Activated CD8-positive, alpha-beta T cell treated with anti-CD3 and anti-CD28 coated beads for 36 hours (primary cell): ENCODE measurements at regions of chr5 and their contacts with region 1.

Region 1: GRCh38 chr5:131382407-131383395 is 118.8 kb downstream of the CDC42SE2 start:
- DNase-seq: peak; percentile 56
- ATAC-seq: peak; percentile 68
- H3K4me3 Mint-ChIP-seq: peak overlapping the region; percentile 47
- H3K27ac Mint-ChIP-seq: peak overlapping the region; percentile 99
- H3K4me1 Mint-ChIP-seq: peaks cover 81% of the 10 kb centered on the region
- H3K27me3 Mint-ChIP-seq: no peaks in the 10 kb centered on the region
- CTCF ChIP-seq: peak; percentile 61

Region 2: GRCh38 chr5:131170540-131171275 is 212.0 kb before region 1 on chr5 and contains the start of gene LYRM7:
- CTCF ChIA-PET with region 1: interaction called, 4 read pairs
- POLR2A ChIA-PET with region 1: interaction called, 3 read pairs
- intact Hi-C with region 1: loop called (anchors 5 kb)
- DNase-seq: peak; percentile 99
- ATAC-seq: peak; percentile 96
- H3K4me3 Mint-ChIP-seq: peak within 1 kb of the TSS; percentile 98
- H3K27ac Mint-ChIP-seq: peak within 1 kb of the TSS; percentile 96
- H3K4me1 Mint-ChIP-seq: peaks cover 37% of the 10 kb centered on the region
- H3K27me3 Mint-ChIP-seq: no peaks in the 10 kb centered on the region
- CTCF ChIP-seq: no peak
- total RNA-seq, gene LYRM7: 23.2 to 24.0 TPM

Region 3: GRCh38 chr5:131272307-131272706 is 110.4 kb before region 1 on chr5:
- CTCF ChIA-PET with region 1: interaction called, 8 read pairs
- POLR2A ChIA-PET with region 1: interaction called, 62 read pairs
- intact Hi-C with region 1: no loop called
- DNase-seq: no peak
- ATAC-seq: peak; percentile 41
- H3K4me3 Mint-ChIP-seq: peak overlapping the region; percentile 72
- H3K27ac Mint-ChIP-seq: peak overlapping the region; percentile 91
- H3K4me1 Mint-ChIP-seq: peaks cover 61% of the 10 kb centered on the region
- H3K27me3 Mint-ChIP-seq: no peaks in the 10 kb centered on the region
- CTCF ChIP-seq: no peak

Region 4: DNA sequence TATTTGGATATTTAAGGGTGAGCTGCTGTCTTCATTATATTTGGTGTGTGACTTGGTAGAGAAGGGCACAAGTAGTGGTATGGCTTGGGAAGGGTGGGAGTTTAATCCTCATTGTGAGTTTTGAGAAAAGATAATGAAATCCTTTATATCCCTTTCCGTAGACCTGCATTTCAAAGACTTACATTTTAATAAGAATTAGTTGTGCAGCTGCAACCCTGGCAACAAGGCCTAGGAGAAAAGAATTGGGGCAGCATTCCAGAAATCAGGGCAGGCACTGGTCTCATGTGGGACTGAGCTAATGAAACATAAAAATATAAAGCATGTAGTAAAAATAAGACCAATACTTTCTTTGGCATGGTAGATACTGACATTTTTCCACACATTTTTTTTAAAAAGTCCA is 58.4 kb before region 1 on chr5:
- CTCF ChIA-PET with region 1: interaction called, 6 read pairs
- POLR2A ChIA-PET with region 1: interaction called, 4 read pairs
- intact Hi-C with region 1: loop called (anchors 5 kb)
- DNase-seq: no peak
- ATAC-seq: no peak
- H3K4me3 Mint-ChIP-seq: no peak overlapping the region
- H3K27ac Mint-ChIP-seq: peak overlapping the region; percentile 26
- H3K4me1 Mint-ChIP-seq: peaks cover 76% of the 10 kb centered on the region
- H3K27me3 Mint-ChIP-seq: no peaks in the 10 kb centered on the region
- CTCF ChIP-seq: no peak

Region 5: GRCh38 chr5:131394128-131394527 is 11.4 kb after region 1 on chr5:
- CTCF ChIA-PET with region 1: interaction called, 38 read pairs
- POLR2A ChIA-PET with region 1: interaction called, 11 read pairs
- intact Hi-C with region 1: loop called (anchors 1 kb)
- DNase-seq: peak; percentile 69
- ATAC-seq: peak; percentile 76
- H3K4me3 Mint-ChIP-seq: peak overlapping the region; percentile 66
- H3K27ac Mint-ChIP-seq: peak overlapping the region; percentile 88
- H3K4me1 Mint-ChIP-seq: peaks cover 83% of the 10 kb centered on the region
- H3K27me3 Mint-ChIP-seq: no peaks in the 10 kb centered on the region
- CTCF ChIP-seq: no peak